BJ (cell line): ENCODE measurements at regions of chr18 and their contacts with region 1.

Region 1: DNA sequence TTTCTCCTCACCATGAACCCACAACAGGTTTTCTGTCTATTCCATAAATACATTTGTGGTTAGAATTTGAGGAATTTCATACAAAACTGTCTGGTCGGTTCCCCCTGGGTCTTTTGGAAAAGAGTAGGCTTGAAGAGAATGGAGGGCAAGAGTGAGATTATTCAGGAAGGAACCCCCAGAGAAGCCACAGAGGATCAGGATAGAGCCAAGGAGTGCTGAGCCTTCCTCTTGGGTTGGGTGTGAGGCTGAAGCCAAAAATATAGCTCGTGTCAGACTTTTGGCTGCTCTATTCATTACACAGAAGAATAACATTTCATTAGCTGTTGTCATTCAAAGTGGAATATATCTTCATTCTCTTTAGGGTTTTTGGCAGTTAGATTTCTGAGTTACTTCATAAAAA is 45.9 kb upstream of the YES1 start:
- DNase-seq: no peak
- H3K4me3 ChIP-seq: no peak overlapping the region
- H3K27me3 ChIP-seq: peaks cover 2% of the 10 kb centered on the region
- CTCF ChIP-seq: no peak

Region 2: GRCh38 chr18:875912-876311 is 17.9 kb after region 1 on chr18:
- CTCF ChIA-PET with region 1: no interaction called
- POLR2A ChIA-PET with region 1: no interaction called
- DNase-seq: no peak
- H3K4me3 ChIP-seq: no peak overlapping the region
- H3K27me3 ChIP-seq: peaks cover 2% of the 10 kb centered on the region; the same call in 1 of the 2 replicates
- CTCF ChIP-seq: no peak

Region 3: GRCh38 chr18:923141-923866 is 65.3 kb after region 1 on chr18:
- CTCF ChIA-PET with region 1: no interaction called
- POLR2A ChIA-PET with region 1: no interaction called
- DNase-seq: no peak
- H3K4me3 ChIP-seq: no peak overlapping the region
- H3K27me3 ChIP-seq: no peaks in the 10 kb centered on the region
- CTCF ChIP-seq: no peak

Region 4: DNA sequence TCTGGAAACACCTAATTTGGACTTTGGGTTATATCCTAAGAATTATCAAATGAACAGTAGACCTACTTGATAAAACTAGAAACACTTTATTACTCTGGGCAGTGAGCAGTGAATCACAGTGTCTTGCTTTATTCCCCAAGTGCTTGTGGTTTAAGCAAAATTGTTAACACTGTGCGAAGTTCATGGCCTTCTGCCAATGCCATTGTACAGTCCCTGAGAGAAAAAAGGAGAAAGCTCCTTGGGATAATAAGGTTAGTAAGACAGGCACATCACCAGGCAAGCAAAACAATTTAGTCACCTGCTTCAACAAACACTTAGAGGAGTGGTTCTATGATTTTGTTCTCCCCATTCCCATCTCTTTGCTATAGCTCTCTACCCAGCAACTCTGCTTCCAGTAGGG is 86.5 kb after region 1 on chr18:
- CTCF ChIA-PET with region 1: no interaction called
- POLR2A ChIA-PET with region 1: interaction called, 10 read pairs
- DNase-seq: peak; percentile 13
- H3K4me3 ChIP-seq: no peak overlapping the region
- H3K27me3 ChIP-seq: no peaks in the 10 kb centered on the region
- CTCF ChIP-seq: no peak